Activated CD4-positive, alpha-beta T cell treated with anti-CD3 and anti-CD28 coated beads, Interleukin-2, amount 10 ng/mL, durations not matched to agents 24 days and 14 days (primary cell): ENCODE measurements at regions of chr2 and their contacts with region 1.

Region 1: DNA sequence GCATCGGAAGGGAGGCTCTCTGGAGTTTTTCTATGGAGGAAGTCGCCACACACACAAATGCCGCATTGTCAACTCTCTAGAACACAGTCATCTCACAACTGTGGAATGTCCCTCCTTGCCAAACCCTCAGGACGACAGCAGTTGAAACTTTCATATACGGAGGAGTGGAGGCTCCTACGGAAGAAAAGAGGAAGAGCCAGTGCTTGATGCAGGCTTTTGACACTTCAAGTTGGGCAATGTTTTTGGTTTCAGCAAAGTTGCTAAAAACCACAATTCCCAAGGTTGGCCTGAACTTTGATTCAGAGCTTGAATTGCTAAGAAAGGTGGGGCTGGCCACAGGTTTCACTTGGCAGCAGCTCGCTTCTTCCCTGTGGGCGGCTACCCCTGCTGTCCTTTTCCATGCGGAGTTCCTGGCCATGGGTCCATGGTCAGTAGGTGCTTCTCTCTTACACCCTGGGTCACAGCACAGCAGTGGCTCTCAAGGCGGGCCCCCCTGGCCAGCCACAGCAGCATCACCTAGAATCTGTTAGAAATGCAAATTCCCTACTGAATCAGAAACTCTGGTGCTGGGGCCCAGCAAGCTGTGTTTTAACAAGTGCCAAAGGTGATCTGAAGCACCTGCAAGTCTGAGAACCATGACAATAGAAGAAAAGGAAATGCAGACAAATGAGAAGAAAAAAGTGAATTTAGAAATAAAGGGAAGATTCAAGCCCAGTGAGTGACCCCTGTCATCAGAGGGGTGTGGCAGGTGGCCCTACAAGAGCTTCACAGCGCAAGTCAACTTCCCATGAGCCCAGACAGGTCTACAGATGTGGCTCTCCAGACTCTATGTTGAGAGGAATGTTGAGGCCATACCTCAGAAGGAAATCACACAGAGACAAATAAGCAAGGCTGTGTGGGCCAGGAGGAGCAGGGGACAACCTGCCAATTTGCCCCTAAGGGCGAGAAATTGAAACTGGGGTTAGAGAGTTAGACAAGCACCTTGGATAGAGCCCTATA is 856.4 kb downstream of the RNF144A start:
- DNase-seq: peak; percentile 79
- H3K4me3 Mint-ChIP-seq: peak overlapping the region; percentile 25
- H3K27ac Mint-ChIP-seq: peak overlapping the region; percentile 84
- H3K4me1 Mint-ChIP-seq: peaks cover 36% of the 10 kb centered on the region
- H3K27me3 Mint-ChIP-seq: no peaks in the 10 kb centered on the region

Region 2: DNA sequence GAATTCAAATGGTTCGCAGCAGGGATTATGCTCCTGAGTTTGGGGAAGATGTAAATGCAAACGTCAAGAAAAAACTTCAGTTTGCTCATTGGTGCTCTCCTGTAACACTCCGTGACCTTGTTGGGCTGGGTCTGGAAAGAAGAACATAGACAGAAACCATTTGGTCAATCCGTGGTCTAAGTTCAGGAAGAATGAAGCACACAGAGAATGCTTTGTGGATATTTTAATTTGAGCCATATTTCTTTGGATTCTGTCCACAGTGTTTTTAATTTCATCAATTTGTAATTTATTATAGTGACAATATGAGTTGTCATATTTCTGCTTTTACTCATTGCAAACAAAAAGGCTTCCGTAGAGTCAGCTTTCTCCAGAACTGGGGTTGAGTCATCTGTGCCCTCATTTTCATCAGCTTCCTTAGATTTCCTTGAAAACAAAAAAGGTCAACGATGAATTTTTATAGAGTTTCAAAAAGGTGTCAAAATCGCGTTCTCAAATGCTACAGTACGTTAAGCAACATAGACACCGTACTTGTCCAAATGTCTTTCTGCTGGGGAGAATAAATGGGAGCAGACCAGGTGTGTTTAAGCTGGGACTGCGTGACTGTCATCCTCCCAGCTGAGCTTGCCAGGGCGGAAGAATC is 250.1 kb before region 1 on chr2:
- intact Hi-C with region 1: loop called (anchors 5 kb)
- DNase-seq: no peak
- H3K4me3 Mint-ChIP-seq: peak overlapping the region; percentile 63
- H3K27ac Mint-ChIP-seq: peak overlapping the region; percentile 98
- H3K4me1 Mint-ChIP-seq: peaks cover 53% of the 10 kb centered on the region
- H3K27me3 Mint-ChIP-seq: no peaks in the 10 kb centered on the region

Region 3: DNA sequence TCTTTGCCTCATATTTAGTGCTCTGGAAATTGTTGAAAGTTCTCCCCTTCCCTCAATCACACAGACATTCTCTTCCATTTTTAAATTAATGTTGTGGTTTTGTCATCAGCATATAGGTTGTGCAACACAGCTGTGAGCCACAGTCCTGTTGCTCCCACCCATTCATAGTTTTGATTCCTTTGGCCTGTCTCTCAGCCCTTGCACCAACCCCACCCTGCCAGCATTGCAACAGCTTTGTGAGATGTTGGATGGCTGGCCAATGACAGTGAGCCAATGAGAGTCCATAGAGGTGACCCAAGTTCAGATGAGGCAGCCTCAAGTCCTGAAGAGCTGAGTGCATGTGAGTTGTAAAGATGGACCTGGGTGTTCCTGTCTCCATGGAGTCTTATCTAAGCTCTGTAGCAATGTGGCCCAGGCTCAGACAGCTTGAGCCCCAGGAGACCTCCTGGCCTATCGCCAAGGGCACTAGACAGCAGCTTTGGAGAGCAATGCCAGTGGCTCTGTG is 81.0 kb before region 1 on chr2:
- intact Hi-C with region 1: loop called (anchors 1 kb)
- DNase-seq: no peak
- H3K4me3 Mint-ChIP-seq: peak overlapping the region; percentile 68
- H3K27ac Mint-ChIP-seq: peak overlapping the region; percentile 91
- H3K4me1 Mint-ChIP-seq: peaks cover 42% of the 10 kb centered on the region
- H3K27me3 Mint-ChIP-seq: no peaks in the 10 kb centered on the region

Region 4: GRCh38 chr2:7748717-7749415 is 24.8 kb before region 1 on chr2:
- intact Hi-C with region 1: no loop called
- DNase-seq: peak; percentile 61
- H3K4me3 Mint-ChIP-seq: no peak overlapping the region
- H3K27ac Mint-ChIP-seq: no peak overlapping the region
- H3K4me1 Mint-ChIP-seq: peaks cover 11% of the 10 kb centered on the region
- H3K27me3 Mint-ChIP-seq: no peaks in the 10 kb centered on the region

Region 5: DNA sequence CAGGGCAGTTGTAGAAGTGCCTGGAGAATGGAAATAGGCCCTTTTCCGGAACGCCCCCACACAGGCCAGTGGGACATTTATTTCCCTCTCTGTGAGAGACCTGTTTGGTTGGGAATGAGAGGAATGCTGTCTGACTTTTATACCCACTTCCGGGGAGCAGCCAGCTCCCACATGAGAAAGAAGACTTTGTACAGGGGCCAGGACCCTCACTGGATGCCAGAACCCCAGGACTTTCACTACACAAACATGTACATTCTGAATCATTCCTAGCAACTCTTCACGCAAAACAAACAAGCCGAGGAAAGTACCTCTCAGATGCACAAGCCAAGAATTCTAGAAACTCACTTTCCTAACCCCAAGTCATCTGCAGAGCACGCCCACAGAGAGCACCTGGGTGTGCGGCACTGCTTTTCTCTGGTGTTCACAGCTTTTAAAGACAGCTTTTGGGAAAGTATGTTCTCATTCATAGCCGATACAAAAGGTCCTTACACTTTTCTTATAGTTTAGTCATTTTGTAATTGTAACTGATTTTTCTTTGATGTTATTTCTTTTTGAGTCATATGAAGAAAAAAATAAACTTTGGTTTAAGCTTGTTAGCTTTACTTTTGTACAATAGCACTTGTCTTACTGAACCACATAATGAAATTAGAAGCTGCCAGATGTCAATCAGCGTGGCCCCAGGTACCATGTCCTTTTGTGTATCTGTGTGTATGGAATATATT is 52.1 kb after region 1 on chr2:
- intact Hi-C with region 1: loop called (anchors 1 kb)
- DNase-seq: peak; percentile 83
- H3K4me3 Mint-ChIP-seq: peak overlapping the region; percentile 47
- H3K27ac Mint-ChIP-seq: peak overlapping the region; percentile 96
- H3K4me1 Mint-ChIP-seq: peaks cover 28% of the 10 kb centered on the region
- H3K27me3 Mint-ChIP-seq: no peaks in the 10 kb centered on the region

Region 6: DNA sequence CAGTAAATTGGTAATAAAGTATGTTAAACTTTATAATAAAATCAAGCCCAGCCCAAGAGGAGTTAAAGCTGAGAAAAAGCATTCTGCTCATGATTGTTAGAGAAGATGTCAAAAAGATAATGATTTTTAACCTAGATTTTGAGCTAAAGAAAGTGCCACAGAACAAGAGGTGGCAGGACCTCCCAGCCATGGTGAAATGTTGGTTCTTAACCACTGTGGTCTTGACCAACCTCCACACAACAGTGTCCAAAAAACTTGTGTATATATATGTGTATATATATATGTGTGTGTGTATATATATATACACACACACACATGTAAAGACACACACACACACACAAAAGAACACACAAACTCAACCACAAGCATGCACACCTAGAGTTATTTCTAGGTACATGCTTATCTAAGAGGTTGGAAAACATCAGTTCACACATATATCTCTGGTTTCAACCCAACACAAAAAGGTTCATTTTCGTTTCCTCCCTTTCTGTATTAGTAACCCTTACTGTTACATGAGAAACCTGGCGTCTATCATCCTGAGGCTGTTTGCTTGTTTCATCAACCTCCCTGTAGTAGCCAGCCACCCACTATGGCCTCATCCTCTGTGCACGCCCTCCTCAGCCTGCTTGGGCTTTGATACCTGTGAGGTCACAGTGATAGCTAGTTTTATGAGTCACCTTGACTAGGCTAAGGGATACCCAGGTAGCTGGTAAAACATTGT is 276.4 kb after region 1 on chr2:
- intact Hi-C with region 1: loop called (anchors 5 kb)
- DNase-seq: peak; percentile 81
- H3K4me3 Mint-ChIP-seq: peak overlapping the region; percentile 7
- H3K27ac Mint-ChIP-seq: peak overlapping the region; percentile 84
- H3K4me1 Mint-ChIP-seq: peaks cover 23% of the 10 kb centered on the region
- H3K27me3 Mint-ChIP-seq: no peaks in the 10 kb centered on the region

Region 7: DNA sequence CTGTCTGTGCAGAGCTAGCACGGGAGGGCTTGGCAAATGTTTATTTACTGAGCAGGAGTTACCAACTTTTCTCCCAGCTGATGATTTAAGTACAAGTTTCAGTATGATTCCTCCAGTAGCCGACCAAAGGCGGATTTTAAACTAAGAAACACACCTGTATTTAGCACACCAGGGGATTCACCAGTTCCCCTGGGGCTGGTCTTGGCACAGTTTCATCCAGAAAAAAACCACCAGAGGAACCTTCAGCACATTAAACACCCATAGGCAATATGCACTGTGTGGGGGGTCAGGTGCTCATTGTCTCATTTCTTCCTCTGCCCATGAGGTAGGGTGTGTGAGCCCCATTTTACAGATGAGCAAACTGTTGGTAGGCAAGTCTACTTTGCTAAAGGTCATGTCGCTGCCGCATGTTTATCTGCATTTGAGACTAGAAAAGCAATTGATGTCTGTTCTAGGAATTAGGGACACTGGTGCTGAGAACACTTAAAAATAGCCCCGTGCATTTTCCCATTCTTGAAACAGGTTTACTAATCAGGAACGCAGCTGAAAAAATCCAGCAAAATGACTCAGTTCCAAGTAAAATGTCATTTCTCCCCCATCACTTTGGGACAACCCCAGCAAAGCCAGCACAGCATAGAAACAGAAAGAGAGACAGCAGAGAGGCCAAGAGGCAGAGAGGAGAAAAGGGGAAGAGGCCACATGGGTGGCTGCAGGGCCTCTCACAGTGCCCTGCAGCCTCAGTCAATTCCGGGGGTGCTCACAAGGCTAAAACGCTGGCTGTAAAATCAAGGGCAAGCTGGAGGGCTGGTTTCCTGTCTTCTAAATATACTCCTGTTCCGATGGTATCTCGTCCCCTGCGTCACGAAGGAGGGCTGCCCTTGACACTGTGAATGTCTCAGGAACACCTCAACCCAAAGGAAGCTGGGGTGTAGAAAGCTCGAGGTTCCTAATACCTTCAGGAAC is 741.4 kb after region 1 on chr2:
- intact Hi-C with region 1: loop called (anchors 1 kb)
- DNase-seq: peak; percentile 87
- H3K4me3 Mint-ChIP-seq: peak overlapping the region; percentile 58
- H3K27ac Mint-ChIP-seq: peak overlapping the region; percentile 96
- H3K4me1 Mint-ChIP-seq: peaks cover 63% of the 10 kb centered on the region
- H3K27me3 Mint-ChIP-seq: no peaks in the 10 kb centered on the region